ENCODE measurements at regions of chr4 and their contacts with region 1.

Region 1: DNA sequence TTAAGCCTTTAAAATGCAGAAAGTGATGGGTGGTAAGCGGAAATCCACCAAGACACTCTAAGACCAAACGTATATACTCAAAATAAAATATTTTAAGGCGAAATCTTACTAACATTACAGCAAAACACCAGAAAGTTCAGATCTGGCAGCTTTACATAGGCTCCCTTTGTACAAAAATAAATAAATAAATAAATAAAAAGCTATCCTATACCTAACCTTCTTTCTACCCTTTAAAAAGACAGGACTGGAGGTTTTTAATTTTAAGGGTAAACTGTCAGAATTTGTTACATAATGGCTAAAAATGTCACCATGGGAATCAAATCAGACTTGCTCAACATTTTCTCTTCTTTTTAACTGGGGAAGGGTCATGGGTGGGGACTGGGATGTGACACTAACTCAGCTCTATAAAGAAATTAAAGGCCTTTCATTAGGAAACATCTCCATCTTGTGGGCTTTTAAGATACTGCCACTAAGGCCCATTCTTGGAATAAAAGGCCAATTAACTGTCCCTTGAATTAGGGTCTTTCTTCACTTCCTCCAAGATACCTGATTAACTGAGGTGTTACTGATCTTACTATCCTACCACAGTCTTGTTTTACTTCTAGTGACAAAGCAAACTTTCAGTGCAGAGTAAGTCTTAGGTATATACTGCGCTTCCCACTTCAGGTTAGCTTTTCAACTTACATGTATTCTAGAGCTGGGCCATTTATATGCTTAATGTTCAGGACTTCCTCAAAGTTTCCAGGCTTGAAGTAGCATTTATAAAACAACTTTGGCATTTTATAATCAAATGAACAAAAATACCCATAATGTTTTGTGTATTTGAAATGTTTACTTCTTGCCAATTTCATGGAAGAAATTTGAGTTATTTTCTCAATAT is 13.3 kb downstream of the HNRNPD start:
- DNase-seq: peak; percentile 66
- ATAC-seq: peak; percentile 65
- H3K4me3 ChIP-seq: no peak overlapping the region
- H3K4me3 Mint-ChIP-seq: no peak overlapping the region
- H3K27ac ChIP-seq: peak overlapping the region in 1 of 2 donors; percentile 69
- H3K27ac Mint-ChIP-seq: peak overlapping the region; percentile 74
- H3K4me1 ChIP-seq: peaks cover 37 to 67% of the 10 kb centered on the region in 2 donors
- H3K4me1 Mint-ChIP-seq: peaks cover 75% of the 10 kb centered on the region
- H3K27me3 ChIP-seq: no peaks in the 10 kb centered on the region
- H3K27me3 Mint-ChIP-seq: no peaks in the 10 kb centered on the region
- CTCF ChIP-seq: peak; percentile 85

Region 2: GRCh38 chr4:82201805-82202641 is 158.5 kb before region 1 on chr4:
- CTCF ChIA-PET with region 1: interaction called, 9 read pairs
- POLR2A ChIA-PET with region 1: no interaction called
- intact Hi-C with region 1: loop called (anchors 1 kb)
- DNase-seq: peak; percentile 69
- ATAC-seq: peak; percentile 43
- H3K4me3 ChIP-seq: no peak overlapping the region
- H3K4me3 Mint-ChIP-seq: no peak overlapping the region
- H3K27ac ChIP-seq: no peak overlapping the region
- H3K27ac Mint-ChIP-seq: no peak overlapping the region
- H3K4me1 ChIP-seq: no peaks in the 10 kb centered on the region
- H3K4me1 Mint-ChIP-seq: no peaks in the 10 kb centered on the region
- H3K27me3 ChIP-seq: no peaks in the 10 kb centered on the region
- H3K27me3 Mint-ChIP-seq: peaks cover 16% of the 10 kb centered on the region
- CTCF ChIP-seq: peak; percentile 85

Region 3: DNA sequence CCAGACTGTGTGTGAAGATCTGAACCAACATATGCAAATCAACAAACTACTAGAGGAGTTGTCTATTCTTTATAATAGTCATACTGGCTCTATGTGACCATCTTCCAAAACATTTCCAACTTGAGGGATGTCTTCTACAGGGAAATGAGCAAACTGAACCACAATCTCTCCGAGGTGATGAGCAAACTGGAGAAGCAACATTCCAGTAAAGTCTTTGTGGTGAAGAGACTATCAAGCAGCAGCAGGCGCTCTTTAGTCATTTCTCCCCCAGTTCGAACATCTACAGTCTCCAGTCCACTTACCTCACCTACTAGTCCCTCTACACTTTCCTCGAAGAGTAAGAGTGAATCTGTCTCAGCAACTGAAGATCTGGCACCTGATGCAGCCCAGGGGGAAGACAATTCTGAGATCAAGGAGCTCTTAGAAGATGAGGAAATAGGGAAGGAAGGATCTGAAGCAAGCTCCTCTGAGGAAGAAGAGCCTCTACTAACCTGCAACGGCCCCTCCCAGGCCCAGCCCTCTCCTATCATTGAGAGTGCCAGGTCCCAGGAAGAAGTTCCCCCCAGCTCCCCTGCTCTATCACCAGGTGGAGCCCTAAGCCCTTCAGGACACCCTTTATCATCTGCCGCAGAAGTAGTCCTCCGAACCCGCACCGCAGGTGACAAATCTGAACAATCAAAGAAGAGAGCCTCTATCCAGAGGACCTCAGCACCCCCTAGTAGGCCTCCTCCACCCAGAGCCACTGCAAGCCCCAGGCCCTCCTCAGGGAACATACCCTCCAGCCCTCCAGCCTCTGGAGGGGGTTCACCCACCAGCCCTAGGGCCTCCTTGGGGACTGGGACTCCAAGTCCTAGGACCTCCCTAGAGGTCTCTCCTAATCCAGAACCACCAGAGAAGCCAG is 84.9 kb before region 1 on chr4:
- CTCF ChIA-PET with region 1: interaction called, 31 read pairs
- POLR2A ChIA-PET with region 1: no interaction called
- intact Hi-C with region 1: no loop called
- DNase-seq: peak; percentile 41
- ATAC-seq: peak; percentile 49
- H3K4me3 ChIP-seq: no peak overlapping the region
- H3K4me3 Mint-ChIP-seq: peak overlapping the region; percentile 65
- H3K27ac ChIP-seq: no peak overlapping the region
- H3K27ac Mint-ChIP-seq: peak overlapping the region; percentile 51
- H3K4me1 ChIP-seq: peaks cover 36 to 39% of the 10 kb centered on the region in 2 donors
- H3K4me1 Mint-ChIP-seq: peaks cover 56% of the 10 kb centered on the region
- H3K27me3 ChIP-seq: no peaks in the 10 kb centered on the region
- H3K27me3 Mint-ChIP-seq: no peaks in the 10 kb centered on the region
- CTCF ChIP-seq: no peak

Region 4: DNA sequence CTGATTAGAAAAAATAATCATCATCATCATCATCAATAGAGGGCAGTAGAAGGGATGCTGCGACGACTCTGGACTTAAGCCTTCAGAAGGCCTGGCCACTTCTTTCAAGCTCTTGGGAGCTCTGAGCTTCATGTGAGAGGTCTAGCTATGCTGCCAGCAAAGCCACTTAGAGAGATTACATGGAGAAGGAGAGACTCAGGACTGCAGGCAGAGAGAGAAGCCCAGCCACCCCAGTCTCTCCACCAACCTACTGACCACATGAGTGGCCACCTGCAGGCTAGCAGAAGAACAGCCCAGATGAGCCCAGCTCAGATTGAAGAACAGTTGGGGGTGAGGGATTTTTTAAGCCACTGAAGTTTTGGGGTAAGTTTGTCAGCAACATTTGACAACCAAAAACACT is 218.4 kb after region 1 on chr4:
- CTCF ChIA-PET with region 1: no interaction called
- POLR2A ChIA-PET with region 1: no interaction called
- intact Hi-C with region 1: no loop called
- DNase-seq: no peak
- ATAC-seq: no peak
- H3K4me3 ChIP-seq: no peak overlapping the region
- H3K4me3 Mint-ChIP-seq: no peak overlapping the region
- H3K27ac ChIP-seq: no peak overlapping the region
- H3K27ac Mint-ChIP-seq: no peak overlapping the region
- H3K4me1 ChIP-seq: no peaks in the 10 kb centered on the region
- H3K4me1 Mint-ChIP-seq: no peaks in the 10 kb centered on the region
- H3K27me3 ChIP-seq: peaks cover 0 to 3% (median 0%) of the 10 kb centered on the region in 4 experiments
- H3K27me3 Mint-ChIP-seq: peaks cover 7% of the 10 kb centered on the region
- CTCF ChIP-seq: no peak

Measured in B cell (primary cell).